ENCODE measurements at regions of chr13 and their contacts with region 1.

Region 1: GRCh38 chr13:50685491-50685890 is 158.0 kb downstream of the DLEU7 start:
- DNase-seq: peak; percentile 88
- ATAC-seq: peak; percentile 84

Region 2: GRCh38 chr13:50589139-50589538 is 96.4 kb before region 1 on chr13:
- intact Hi-C with region 1: loop called (anchors 10 kb)
- DNase-seq: no peak
- ATAC-seq: peak; percentile 55

Measured in left ventricle myocardium superior (tissue), 1 donor.